Mammary epithelial cell (primary cell): ENCODE measurements at regions of chr1 and their contacts with region 1.

Region 1: GRCh38 chr1:27365372-27366112 is 1.2 kb downstream of the MAP3K6 start:
- DNase-seq: peak; percentile 89
- H3K4me3 ChIP-seq: peak overlapping the region; percentile 68 to 86 (median 85)
- H3K27ac ChIP-seq: peak overlapping the region; percentile 90
- H3K4me1 ChIP-seq: peaks cover 18% of the 10 kb centered on the region
- H3K27me3 ChIP-seq: no peaks in the 10 kb centered on the region
- CTCF ChIP-seq: no peak

Region 2: GRCh38 chr1:26784023-26784871 is 581.3 kb before region 1 on chr1:
- CTCF ChIA-PET with region 1: no interaction called
- dilution Hi-C with region 1: no loop called
- in situ Hi-C with region 1: no loop called
- intact Hi-C with region 1: no loop called
- DNase-seq: no peak
- H3K4me3 ChIP-seq: no peak overlapping the region
- H3K27ac ChIP-seq: no peak overlapping the region
- H3K4me1 ChIP-seq: peaks cover 26% of the 10 kb centered on the region
- H3K27me3 ChIP-seq: no peaks in the 10 kb centered on the region
- CTCF ChIP-seq: no peak

Region 3: DNA sequence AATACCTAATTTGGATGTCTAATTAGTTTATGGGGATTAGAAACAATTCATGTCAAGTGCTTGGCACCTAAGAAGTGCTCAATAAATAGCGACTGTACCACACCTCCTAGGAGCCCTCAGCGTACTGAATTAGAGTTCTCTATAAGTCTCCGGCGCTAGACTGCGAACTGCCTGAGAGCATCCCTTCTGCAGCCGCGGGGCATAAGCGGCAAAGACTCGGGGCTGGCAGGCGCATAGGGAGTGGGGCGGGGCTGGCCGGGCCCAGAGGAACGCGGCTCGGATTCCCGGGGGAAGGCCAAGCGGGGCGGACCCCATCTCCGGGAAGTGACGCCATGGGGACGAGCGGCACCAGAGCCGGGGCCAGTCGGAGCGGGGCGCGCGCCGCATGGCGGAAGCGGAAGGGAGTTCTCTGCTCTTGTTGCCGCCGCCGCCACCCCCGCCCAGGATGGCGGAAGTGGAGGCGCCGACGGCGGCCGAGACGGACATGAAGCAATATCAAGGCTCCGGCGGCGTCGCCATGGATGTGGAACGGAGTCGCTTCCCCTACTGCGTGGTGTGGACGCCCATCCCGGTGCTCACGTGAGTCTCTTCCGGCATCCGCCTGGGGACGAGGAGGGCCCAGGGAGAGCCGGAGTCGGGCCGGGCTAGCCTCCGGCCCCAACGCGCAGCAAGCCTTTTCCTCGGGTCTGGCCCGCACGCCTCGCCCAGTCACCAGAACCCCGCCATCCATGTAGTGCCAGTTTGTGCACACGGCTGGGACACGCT is 43.5 kb before region 1 on chr1 and contains the start of gene TMEM222:
- CTCF ChIA-PET with region 1: no interaction called
- dilution Hi-C with region 1: no loop called
- in situ Hi-C with region 1: no loop called
- intact Hi-C with region 1: loop called (anchors 5 kb)
- DNase-seq: peak; percentile 97
- H3K4me3 ChIP-seq: peak within 1 kb of the TSS; percentile 88 to 98 (median 88)
- H3K27ac ChIP-seq: peak within 1 kb of the TSS; percentile 86
- H3K4me1 ChIP-seq: peaks cover 14% of the 10 kb centered on the region
- H3K27me3 ChIP-seq: no peaks in the 10 kb centered on the region
- CTCF ChIP-seq: no peak
- total RNA-seq, gene TMEM222: 23.0 to 39.9 TPM

Region 4: GRCh38 chr1:27332536-27333281 is 32.8 kb before region 1 on chr1:
- CTCF ChIA-PET with region 1: interaction called, 19 read pairs
- dilution Hi-C with region 1: no loop called
- in situ Hi-C with region 1: no loop called
- intact Hi-C with region 1: loop called (anchors 1 kb)
- DNase-seq: no peak
- H3K4me3 ChIP-seq: no peak overlapping the region
- H3K27ac ChIP-seq: no peak overlapping the region
- H3K4me1 ChIP-seq: no peaks in the 10 kb centered on the region
- H3K27me3 ChIP-seq: no peaks in the 10 kb centered on the region
- CTCF ChIP-seq: peak; percentile 86 to 90

Region 5: DNA sequence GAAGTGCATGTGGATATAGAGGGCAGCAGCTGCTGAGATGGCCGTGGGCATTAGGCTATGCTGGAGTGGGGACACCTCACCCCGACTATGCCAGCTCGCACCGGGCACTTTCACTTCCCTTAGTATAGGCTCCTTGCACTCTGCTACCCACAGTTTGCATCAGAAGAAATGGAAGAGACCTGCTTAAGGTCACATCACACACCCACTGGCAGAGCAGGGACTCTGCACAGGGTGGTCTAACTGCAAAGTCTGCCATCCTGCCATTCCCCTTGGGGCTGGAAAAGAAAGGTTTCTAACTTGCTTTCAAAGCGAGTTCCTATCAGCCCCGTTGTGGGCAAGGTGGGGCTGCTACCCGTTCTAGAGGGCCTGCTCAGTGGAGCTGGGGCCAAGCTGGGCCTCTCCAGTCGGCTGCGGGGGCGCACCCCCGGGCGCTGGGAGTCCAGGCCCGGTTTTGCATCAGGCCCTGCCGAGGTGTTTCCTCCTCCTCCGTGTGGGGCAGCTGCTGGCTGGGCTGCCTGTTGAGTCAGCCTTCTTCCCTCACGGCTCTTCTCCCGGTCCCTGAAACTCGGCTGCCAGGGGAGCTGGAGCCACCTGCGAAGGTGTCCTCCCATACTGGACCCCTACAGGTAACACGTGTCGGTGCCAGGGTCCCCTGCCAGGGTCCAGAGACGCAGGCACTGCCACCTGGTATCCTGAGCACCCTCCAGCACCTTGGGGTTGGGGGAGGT is 23.9 kb before region 1 on chr1 and contains the start of gene SYTL1:
- CTCF ChIA-PET with region 1: interaction called, 7 read pairs
- dilution Hi-C with region 1: no loop called
- in situ Hi-C with region 1: no loop called
- intact Hi-C with region 1: loop called (anchors 1 kb)
- DNase-seq: peak; percentile 86
- H3K4me3 ChIP-seq: peak within 1 kb of the TSS; percentile 79 to 90 (median 83)
- H3K27ac ChIP-seq: peak within 1 kb of the TSS; percentile 86
- H3K4me1 ChIP-seq: peaks cover 32% of the 10 kb centered on the region
- H3K27me3 ChIP-seq: no peaks in the 10 kb centered on the region
- CTCF ChIP-seq: no peak
- total RNA-seq, gene SYTL1: 63.3 to 91.8 TPM

Region 6: GRCh38 chr1:27383039-27383605 is 17.6 kb after region 1 on chr1 and contains the start of gene CD164L2:
- CTCF ChIA-PET with region 1: interaction called, 17 read pairs
- dilution Hi-C with region 1: no loop called
- in situ Hi-C with region 1: no loop called
- intact Hi-C with region 1: loop called (anchors 1 kb)
- DNase-seq: peak; percentile 54
- H3K4me3 ChIP-seq: peak within 1 kb of the TSS; percentile 12 to 43 (median 39)
- H3K27ac ChIP-seq: no peak within 1 kb of the TSS
- H3K4me1 ChIP-seq: peaks cover 13% of the 10 kb centered on the region
- H3K27me3 ChIP-seq: no peaks in the 10 kb centered on the region
- CTCF ChIP-seq: no peak
- total RNA-seq, gene CD164L2: 1.7 to 2.7 TPM

Region 7: DNA sequence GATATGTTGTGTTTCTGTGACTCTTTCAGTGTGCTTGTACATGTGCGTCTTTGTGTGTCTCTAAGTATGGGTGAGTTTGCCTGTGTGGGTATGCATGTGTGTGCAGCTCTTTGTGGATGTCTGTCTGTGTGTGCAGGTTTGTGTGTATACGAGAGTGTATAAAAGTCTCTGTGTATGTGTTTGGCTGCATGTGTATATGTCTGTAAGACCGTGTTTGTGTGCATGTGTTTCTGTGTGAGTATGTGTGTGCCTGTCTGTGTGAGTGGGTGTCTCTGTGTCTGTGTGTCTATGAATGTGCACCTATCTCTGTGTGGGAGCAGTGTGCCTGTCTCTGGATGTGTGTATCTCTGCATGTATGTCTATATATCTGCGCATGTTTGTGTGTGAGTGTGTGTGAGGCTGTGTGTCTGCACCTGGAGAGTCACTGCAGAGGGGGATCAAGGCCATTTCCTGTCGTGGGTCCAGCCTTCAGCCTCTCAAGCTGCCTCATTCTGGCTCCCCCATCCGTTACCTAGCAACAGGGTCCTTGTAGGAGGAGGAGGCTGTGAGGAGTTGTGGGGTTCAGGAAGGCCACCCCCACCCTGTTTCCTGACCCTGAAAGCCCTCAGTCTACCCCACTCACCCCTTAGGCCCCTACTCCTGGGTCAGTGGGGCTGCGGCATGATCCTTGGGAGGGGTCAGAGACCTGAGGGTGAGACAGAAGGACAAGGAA is 259.1 kb after region 1 on chr1:
- CTCF ChIA-PET with region 1: no interaction called
- dilution Hi-C with region 1: no loop called
- in situ Hi-C with region 1: no loop called
- intact Hi-C with region 1: no loop called
- DNase-seq: no peak
- H3K4me3 ChIP-seq: no peak overlapping the region
- H3K27ac ChIP-seq: peak overlapping the region; percentile 23
- H3K4me1 ChIP-seq: peaks cover 17% of the 10 kb centered on the region
- H3K27me3 ChIP-seq: no peaks in the 10 kb centered on the region
- CTCF ChIP-seq: no peak